GM10248 (cell line): ENCODE measurements at regions of chr6 and their contacts with region 1.

Region 1: DNA sequence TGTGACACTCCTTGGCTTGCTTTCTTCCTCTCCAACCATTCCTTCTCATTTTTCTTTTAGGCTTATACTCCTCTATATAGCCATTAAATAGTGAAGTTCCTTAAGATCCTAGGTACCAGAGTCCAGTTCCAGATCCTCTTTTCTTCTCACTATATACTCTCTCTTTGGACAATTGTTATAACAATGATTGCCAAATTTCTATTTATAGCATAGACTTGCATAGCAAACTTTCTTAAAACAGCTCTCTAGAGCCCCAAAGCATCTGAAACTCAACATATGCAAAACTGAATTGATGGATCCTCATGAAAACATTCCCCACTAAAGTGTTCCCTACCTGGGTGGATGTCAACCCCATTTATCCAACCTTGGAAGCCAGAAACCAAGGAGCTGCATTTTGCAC is 13.4 kb downstream of the PHIP start:
- DNase-seq: no peak
- CTCF ChIP-seq: no peak

Region 2: GRCh38 chr6:79048611-79049010 is 16.0 kb before region 1 on chr6:
- CTCF ChIA-PET with region 1: interaction called, 11 read pairs
- POLR2A ChIA-PET with region 1: interaction called, 3 read pairs
- DNase-seq: no peak
- CTCF ChIP-seq: no peak

Region 3: DNA sequence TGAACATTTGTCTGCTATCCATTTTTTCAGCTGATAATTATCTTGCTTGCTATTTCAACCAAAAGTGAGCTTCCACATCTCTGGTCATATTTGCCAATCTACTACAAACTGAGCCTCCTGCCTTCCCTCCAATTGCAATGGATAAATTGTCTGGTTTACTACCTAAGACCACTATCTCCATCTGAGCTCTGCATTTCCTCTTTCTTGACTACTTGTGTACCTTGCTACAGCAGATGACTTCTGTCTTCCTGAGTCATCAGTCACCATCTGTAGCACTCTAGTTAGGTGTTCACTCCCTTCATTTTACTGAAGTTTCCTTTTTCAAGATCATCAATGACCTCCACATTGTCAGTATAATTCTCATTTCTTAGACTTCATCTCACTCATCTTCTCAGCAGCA is 46.9 kb after region 1 on chr6:
- CTCF ChIA-PET with region 1: no interaction called
- POLR2A ChIA-PET with region 1: no interaction called
- DNase-seq: no peak
- CTCF ChIP-seq: no peak

Region 4: DNA sequence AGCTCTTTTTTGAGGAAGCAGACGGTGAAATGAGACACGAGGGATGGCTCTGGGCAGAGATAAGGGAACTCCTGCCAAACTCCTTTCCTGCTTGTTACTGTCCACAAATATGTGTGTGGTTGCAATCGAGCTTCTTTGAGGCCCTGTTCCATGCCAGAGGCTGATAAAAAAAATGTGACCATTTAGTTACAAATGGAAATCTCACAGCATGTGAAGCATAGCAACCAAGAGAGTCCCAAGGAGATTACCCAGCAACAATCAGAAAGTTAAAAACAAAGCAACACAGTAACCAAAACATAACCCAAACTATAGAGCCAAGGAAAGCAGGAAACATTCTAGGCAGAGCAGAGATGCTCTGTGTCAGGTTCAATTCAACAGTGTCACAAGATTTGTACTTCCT is 205.2 kb after region 1 on chr6:
- CTCF ChIA-PET with region 1: no interaction called
- POLR2A ChIA-PET with region 1: no interaction called
- DNase-seq: no peak
- CTCF ChIP-seq: no peak